ENCODE measurements at regions of chr2 and their contacts with region 1.

Region 1: GRCh38 chr2:47386551-47386950 is 16.4 kb upstream of the MSH2 start:
- DNase-seq: no peak
- ATAC-seq: no peak
- H3K4me3 ChIP-seq: no peak overlapping the region
- H3K27ac ChIP-seq: no peak overlapping the region
- H3K4me1 ChIP-seq: no peaks in the 10 kb centered on the region
- H3K27me3 ChIP-seq: no peaks in the 10 kb centered on the region
- CTCF ChIP-seq: no peak

Region 2: DNA sequence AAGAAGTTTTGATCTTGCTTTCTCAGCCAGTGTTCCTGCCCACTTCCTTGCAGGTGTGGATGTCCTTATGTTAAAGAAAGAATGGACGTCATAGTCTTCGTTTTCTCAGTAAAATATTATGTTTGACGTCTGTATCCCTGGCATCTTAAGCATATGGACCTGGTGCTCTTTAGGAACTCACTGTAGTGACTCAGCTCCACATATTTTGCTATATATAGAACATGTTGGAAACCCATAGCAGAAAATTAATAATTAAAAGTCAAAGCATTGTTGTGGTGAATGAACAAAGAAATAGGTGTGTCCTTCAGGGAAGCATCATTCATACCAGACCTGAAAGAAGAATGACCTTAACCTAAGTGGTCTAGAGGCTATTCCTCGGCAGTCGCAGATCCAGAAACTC is 667.1 kb before region 1 on chr2:
- intact Hi-C with region 1: no loop called
- DNase-seq: no peak
- ATAC-seq: no peak
- H3K4me3 ChIP-seq: no peak overlapping the region
- H3K27ac ChIP-seq: no peak overlapping the region
- H3K4me1 ChIP-seq: peaks cover 44% of the 10 kb centered on the region
- H3K27me3 ChIP-seq: no peaks in the 10 kb centered on the region
- CTCF ChIP-seq: no peak

Region 3: GRCh38 chr2:47339745-47340541 is 46.6 kb before region 1 on chr2:
- intact Hi-C with region 1: loop called (anchors 10 kb)
- DNase-seq: no peak
- ATAC-seq: peak; percentile 64 to 70
- H3K4me3 ChIP-seq: no peak overlapping the region
- H3K27ac ChIP-seq: peak overlapping the region; percentile 26
- H3K4me1 ChIP-seq: peaks cover 13% of the 10 kb centered on the region
- H3K27me3 ChIP-seq: no peaks in the 10 kb centered on the region
- CTCF ChIP-seq: no peak